ENCODE measurements at regions of chr1 and their contacts with region 1.

Region 1: DNA sequence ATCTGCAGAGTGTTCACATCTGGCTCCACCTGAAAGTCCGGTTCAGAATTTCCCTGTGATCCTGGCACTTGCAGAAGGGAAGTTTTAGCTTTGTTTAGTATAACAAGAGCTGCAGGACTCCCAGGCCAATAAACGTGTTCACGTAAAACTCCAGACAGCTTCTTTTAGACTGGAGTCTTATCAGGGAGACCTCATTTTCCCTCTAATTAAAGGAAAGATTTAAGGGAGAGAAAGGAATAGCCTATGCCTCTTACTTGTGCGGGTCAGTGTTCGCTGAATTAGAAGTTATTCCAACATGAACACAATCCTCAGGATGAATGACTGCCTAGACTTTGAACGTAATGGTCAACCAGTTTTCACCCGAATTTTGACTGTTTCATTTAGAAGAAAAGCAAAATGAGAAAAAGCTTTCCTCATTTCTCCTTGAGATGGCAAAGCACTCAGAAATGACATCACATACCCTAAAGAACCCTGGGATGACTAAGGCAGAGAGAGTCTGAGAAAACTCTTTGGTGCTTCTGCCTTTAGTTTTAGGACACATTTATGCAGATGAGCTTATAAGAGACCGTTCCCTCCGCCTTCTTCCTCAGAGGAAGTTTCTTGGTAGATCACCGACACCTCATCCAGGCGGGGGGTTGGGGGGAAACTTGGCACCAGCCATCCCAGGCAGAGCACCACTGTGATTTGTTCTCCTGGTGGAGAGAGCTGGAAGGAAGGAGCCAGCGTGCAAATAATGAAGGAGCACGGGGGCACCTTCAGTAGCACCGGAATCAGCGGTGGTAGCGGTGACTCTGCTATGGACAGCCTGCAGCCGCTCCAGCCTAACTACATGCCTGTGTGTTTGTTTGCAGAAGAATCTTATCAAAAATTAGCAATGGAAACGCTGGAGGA is 202.1 kb upstream of the SGIP1 start:
- H3K4me3 Mint-ChIP-seq: peak overlapping the region; percentile 85
- H3K27ac Mint-ChIP-seq: peak overlapping the region; percentile 83
- H3K4me1 Mint-ChIP-seq: peaks cover 57% of the 10 kb centered on the region
- H3K27me3 Mint-ChIP-seq: no peaks in the 10 kb centered on the region

Region 2: GRCh38 chr1:65419681-65420589 is 912.0 kb before region 1 on chr1:
- intact Hi-C with region 1: loop called (anchors 10 kb)
- H3K4me3 Mint-ChIP-seq: no peak overlapping the region
- H3K27ac Mint-ChIP-seq: no peak overlapping the region
- H3K4me1 Mint-ChIP-seq: peaks cover 15% of the 10 kb centered on the region
- H3K27me3 Mint-ChIP-seq: no peaks in the 10 kb centered on the region

Region 3: GRCh38 chr1:66276218-66276617 is 55.7 kb before region 1 on chr1:
- intact Hi-C with region 1: loop called (anchors 5 kb)
- H3K4me3 Mint-ChIP-seq: no peak overlapping the region
- H3K27ac Mint-ChIP-seq: peak overlapping the region; percentile 75
- H3K4me1 Mint-ChIP-seq: peaks cover 67% of the 10 kb centered on the region
- H3K27me3 Mint-ChIP-seq: peaks cover 2% of the 10 kb centered on the region

Region 4: DNA sequence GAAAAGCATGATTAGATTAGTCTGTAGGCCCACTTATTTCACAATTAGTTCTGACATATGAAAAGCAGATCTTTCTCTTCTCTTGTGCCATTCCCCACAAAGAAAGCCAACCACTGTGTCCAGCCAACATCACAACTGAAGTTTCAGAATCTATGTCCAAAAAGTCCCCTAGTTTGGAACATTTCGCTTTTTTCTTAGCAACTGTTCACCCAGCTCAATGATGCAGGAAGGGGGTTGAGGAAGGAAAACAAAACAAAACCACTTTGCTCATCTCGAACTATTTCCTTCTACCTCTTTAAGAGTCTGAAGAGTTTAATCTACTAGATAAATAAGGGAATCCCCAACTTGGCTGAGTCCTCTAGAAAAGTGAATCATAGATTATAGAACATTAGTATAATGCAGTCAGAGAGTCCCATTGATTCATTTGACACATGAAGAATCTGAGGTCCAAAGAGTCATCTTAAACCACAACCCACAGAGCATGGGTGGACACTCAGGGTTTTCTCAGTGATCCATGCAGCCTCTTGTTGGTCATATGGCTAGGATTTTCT is 42.7 kb after region 1 on chr1:
- intact Hi-C with region 1: loop called (anchors 5 kb)
- H3K4me3 Mint-ChIP-seq: no peak overlapping the region
- H3K27ac Mint-ChIP-seq: no peak overlapping the region
- H3K4me1 Mint-ChIP-seq: peaks cover 48% of the 10 kb centered on the region
- H3K27me3 Mint-ChIP-seq: peaks cover 11% of the 10 kb centered on the region

Region 5: GRCh38 chr1:66396212-66396890 is 64.4 kb after region 1 on chr1:
- intact Hi-C with region 1: loop called (anchors 1 kb)
- H3K4me3 Mint-ChIP-seq: peak overlapping the region; percentile 10
- H3K27ac Mint-ChIP-seq: peak overlapping the region; percentile 65
- H3K4me1 Mint-ChIP-seq: peaks cover 75% of the 10 kb centered on the region
- H3K27me3 Mint-ChIP-seq: peaks cover 11% of the 10 kb centered on the region

Region 6: GRCh38 chr1:66711420-66711819 is 379.5 kb after region 1 on chr1:
- intact Hi-C with region 1: no loop called
- H3K4me3 Mint-ChIP-seq: no peak overlapping the region
- H3K27ac Mint-ChIP-seq: no peak overlapping the region
- H3K4me1 Mint-ChIP-seq: no peaks in the 10 kb centered on the region
- H3K27me3 Mint-ChIP-seq: no peaks in the 10 kb centered on the region

Measured in dendritic cell treated with granulocyte-macrophage colony-stimulating factor and Interleukin-4, amounts not matched to agents 40 ng/mL and 50 ng/mL, for 4 days (primary cell).